ENCODE measurements at regions of chr17 and their contacts with region 1.

Region 1: DNA sequence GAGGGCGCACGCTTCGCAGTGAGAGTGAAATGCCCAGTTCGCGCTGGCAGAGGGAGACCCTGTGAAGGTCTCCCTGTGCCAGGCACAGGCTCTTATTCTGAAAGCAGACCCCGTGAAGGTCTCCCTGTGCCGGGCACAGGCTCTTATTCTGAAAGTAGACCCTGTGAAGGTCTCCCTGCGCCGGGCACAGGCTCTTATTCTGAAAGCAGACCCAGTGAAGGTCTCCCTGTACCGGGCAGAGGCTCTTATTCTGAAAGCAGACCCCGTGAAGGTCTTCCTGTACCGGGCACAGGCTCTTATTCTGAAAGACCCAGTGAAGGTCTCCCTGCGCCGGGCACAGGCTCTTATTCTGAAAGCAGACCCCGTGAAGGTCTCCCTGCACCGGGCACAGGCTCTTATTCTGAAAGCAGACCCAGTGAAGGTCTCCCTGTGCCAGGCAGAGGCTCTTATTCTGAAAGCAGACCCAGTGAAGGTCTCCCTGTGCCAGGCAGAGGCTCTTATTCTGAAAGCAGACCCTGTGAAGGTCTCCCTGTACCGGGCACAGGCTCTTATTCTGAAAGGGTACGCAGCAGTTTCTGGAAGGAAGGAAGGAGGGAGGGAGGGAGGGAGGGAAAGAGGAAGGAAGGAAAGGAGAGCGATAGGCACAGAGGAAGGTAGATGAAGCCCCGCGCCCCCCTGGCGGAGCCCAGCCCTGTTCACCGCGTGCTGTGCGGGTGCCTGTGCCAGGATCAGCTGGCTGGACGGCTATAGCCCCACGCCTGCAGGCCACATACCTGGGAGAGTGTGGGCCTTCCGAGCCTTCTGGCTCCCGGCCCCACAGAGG is 55.3 kb downstream of the WDR45B start:
- DNase-seq: peak; percentile 91
- H3K4me3 ChIP-seq: peak overlapping the region; percentile 55 to 62 (median 59)
- H3K27ac ChIP-seq: peak overlapping the region; percentile 91 to 93 (median 92)
- H3K4me1 ChIP-seq: peaks cover 0 to 64% (median 60%) of the 10 kb centered on the region in 4 donors
- H3K27me3 ChIP-seq: no peaks in the 10 kb centered on the region
- CTCF ChIP-seq: no peak
- EP300 ChIP-seq: no peak
- POLR2A ChIP-seq: no peak

Region 2: GRCh38 chr17:82332669-82333278 is 260.2 kb before region 1 on chr17:
- intact Hi-C with region 1: loop called (anchors 10 kb)
- DNase-seq: peak; percentile 85
- H3K4me3 ChIP-seq: peak overlapping the region; percentile 53 to 79 (median 60)
- H3K27ac ChIP-seq: peak overlapping the region; percentile 72 to 83 (median 79)
- H3K4me1 ChIP-seq: peaks cover 0 to 56% (median 48%) of the 10 kb centered on the region in 4 donors
- H3K27me3 ChIP-seq: no peaks in the 10 kb centered on the region
- CTCF ChIP-seq: no peak
- EP300 ChIP-seq: no peak
- POLR2A ChIP-seq: no peak

Region 3: GRCh38 chr17:82548681-82549303 is 44.2 kb before region 1 on chr17:
- intact Hi-C with region 1: no loop called
- DNase-seq: peak; percentile 76
- H3K4me3 ChIP-seq: no peak overlapping the region
- H3K27ac ChIP-seq: peak overlapping the region in 3 of 4 donors; percentile 58 to 97 (median 62)
- H3K4me1 ChIP-seq: peaks cover 0 to 94% (median 81%) of the 10 kb centered on the region in 4 donors
- H3K27me3 ChIP-seq: no peaks in the 10 kb centered on the region
- CTCF ChIP-seq: no peak
- EP300 ChIP-seq: peak in 1 of 4 donors; percentile 64
- POLR2A ChIP-seq: no peak

Region 4: GRCh38 chr17:82559566-82560251 is 33.3 kb before region 1 on chr17:
- intact Hi-C with region 1: loop called (anchors 5 kb)
- DNase-seq: no peak
- H3K4me3 ChIP-seq: no peak overlapping the region
- H3K27ac ChIP-seq: peak overlapping the region in 3 of 4 donors; percentile 22 to 42 (median 26)
- H3K4me1 ChIP-seq: peaks cover 0 to 77% (median 50%) of the 10 kb centered on the region in 4 donors
- H3K27me3 ChIP-seq: no peaks in the 10 kb centered on the region
- CTCF ChIP-seq: no peak
- EP300 ChIP-seq: peak in 1 of 4 donors; percentile 7
- POLR2A ChIP-seq: no peak

Measured in sigmoid colon (tissue), 7 donors.